ENCODE measurements at regions of chr11 and their contacts with region 1.

Region 1: DNA sequence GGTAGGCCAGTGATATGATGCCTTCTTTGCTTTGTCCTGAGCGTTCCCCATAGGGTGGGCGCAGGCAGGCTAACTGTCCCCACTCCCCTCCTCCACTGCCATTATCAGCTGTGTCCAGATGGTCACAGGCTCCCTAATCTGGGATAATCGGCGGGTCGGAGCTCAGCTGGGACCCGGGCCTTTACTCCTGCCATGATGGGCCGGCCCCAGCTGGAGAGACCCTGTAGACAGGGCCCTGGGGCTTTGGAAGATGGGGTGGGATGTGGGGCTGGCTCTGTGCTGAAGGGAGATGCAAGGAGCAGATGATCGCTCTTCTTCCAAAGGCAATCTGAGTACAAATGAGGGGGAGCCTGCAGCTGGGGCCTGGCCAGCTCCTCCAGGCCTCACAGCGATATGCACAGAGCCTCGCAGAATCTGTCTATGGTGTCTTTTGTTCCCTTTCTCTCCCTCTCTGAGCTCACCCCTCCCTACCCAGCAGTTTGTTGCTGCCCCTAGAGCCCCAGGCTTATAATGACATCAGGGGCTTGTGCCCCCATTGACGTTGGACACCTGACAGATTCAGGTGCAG is 11.9 kb downstream of the KLHL35 start:
- DNase-seq: no peak
- H3K4me3 ChIP-seq: no peak overlapping the region
- CTCF ChIP-seq: no peak

Region 2: GRCh38 chr11:74937696-74938475 is 483.2 kb before region 1 on chr11:
- CTCF ChIA-PET with region 1: no interaction called
- POLR2A ChIA-PET with region 1: no interaction called
- DNase-seq: no peak
- H3K4me3 ChIP-seq: no peak overlapping the region
- CTCF ChIP-seq: no peak

Region 3: DNA sequence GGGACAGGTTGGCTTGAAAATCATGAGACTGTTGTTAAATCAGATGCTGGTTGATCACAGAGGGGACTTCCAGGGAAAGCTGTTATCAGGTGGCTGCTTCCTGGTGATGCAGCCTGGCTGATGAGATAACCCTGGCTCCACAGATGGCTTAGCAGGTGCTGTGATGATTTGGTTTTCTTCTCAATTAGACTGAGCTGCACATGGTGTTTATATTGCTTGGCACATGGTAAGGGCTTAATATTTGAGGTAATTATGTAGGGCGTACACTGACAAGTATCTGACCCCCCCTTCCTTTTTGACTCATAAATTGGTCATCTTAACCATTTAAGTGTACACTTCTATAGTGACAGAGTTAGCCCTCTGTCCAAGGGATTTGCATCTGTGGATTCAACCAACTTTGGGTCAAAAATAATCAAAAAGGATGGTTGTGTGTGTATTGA is 14.8 kb before region 1 on chr11:
- CTCF ChIA-PET with region 1: interaction called, 90 read pairs
- POLR2A ChIA-PET with region 1: interaction called, 8 read pairs
- DNase-seq: no peak
- H3K4me3 ChIP-seq: no peak overlapping the region
- CTCF ChIP-seq: no peak

Measured in AG04449 (cell line).